Breast epithelium (tissue), 4 donors: ENCODE measurements at regions of chrX and their contacts with region 1.

Region 1: GRCh38 chrX:18026166-18026565 is 165.1 kb upstream of the RAI2 start:
- DNase-seq: no peak
- H3K4me3 ChIP-seq: no peak overlapping the region
- H3K27ac ChIP-seq: no peak overlapping the region
- H3K4me1 ChIP-seq: no peaks in the 10 kb centered on the region
- H3K27me3 ChIP-seq: peaks cover 0 to 32% of the 10 kb centered on the region in 2 donors
- CTCF ChIP-seq: no peak
- POLR2A ChIP-seq: no peak

Region 2: DNA sequence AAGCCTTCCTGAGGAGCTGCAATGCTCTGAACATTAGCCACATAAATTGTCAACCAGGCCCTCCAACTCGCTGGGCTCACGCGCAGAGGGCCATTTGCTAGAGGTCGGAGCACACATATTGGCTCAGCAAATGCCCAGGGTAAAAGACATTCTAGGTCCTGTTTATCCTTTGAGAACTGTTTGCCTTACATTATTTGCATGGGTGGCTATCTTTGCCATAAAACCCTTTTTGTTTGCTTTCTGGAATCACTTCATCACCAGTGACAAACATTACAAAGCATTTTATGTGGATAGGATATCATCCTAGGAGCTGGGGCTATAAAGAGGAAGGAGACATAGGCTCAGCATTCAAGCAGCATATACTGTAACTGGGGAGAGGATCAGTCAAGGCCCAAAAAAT is 15.9 kb before region 1 on chrX:
- intact Hi-C with region 1: loop called (anchors 1 kb)
- DNase-seq: no peak
- H3K4me3 ChIP-seq: no peak overlapping the region
- H3K27ac ChIP-seq: no peak overlapping the region
- H3K4me1 ChIP-seq: no peaks in the 10 kb centered on the region
- H3K27me3 ChIP-seq: peaks cover 0 to 23% of the 10 kb centered on the region in 2 donors
- CTCF ChIP-seq: no peak
- POLR2A ChIP-seq: no peak